Esophagus squamous epithelium (tissue), 5 donors: ENCODE measurements at regions of chr18 and their contacts with region 1.

Region 1: GRCh38 chr18:55415258-55415871 is 172.6 kb downstream of the TCF4 start:
- DNase-seq: peak; percentile 4
- H3K4me3 ChIP-seq: no peak overlapping the region
- H3K27ac ChIP-seq: peak overlapping the region in 1 of 4 donors; percentile 27
- H3K4me1 ChIP-seq: peaks cover 0 to 57% (median 3%) of the 10 kb centered on the region in 3 donors
- H3K27me3 ChIP-seq: no peaks in the 10 kb centered on the region
- CTCF ChIP-seq: peak; percentile 69 to 90 (median 86)
- POLR2A ChIP-seq: no peak

Region 2: DNA sequence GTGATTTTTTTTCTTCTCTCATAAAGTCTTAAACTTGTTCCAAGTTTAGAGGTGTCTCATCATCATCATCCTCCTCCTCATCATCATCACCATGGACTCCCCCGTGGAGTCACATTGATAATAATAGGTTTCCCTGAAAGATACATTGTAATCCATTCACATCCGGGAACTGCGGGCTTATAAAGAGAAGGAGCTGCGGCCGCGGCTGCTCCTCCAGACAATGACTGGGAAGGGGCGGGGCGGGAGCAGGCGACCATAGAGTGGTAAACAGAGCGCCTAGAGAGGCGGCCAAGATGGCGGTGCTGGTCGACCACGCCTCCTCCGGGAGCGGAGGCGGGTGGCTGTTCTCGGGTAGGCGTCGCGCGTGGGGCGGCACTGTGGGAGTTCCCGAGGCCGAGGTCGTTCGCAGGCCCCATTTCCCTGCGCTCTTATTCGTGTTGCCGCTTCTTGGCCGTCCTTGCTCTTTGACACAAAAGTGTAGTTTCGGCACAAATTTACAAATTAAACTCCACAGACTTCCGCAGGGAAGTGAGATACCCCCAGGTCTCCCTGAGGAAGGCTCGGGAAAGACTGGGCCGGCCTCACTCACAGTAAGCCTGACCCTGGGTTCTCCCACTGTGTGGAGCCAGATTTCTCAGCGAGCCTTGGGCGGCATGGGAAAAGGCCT is 174.4 kb after region 1 on chr18:
- intact Hi-C with region 1: loop called (anchors 10 kb)
- DNase-seq: peak; percentile 67
- H3K4me3 ChIP-seq: peak overlapping the region; percentile 61 to 81 (median 77)
- H3K27ac ChIP-seq: peak overlapping the region; percentile 87 to 97 (median 92)
- H3K4me1 ChIP-seq: peaks cover 4 to 37% (median 9%) of the 10 kb centered on the region in 3 donors
- H3K27me3 ChIP-seq: no peaks in the 10 kb centered on the region
- CTCF ChIP-seq: no peak
- POLR2A ChIP-seq: peak in 2 of 4 donors; percentile 57 to 63

Region 3: GRCh38 chr18:55781481-55781957 is 366.2 kb after region 1 on chr18:
- intact Hi-C with region 1: loop called (anchors 10 kb)
- DNase-seq: no peak
- H3K4me3 ChIP-seq: no peak overlapping the region
- H3K27ac ChIP-seq: no peak overlapping the region
- H3K4me1 ChIP-seq: peaks cover 0 to 33% (median 0%) of the 10 kb centered on the region in 3 donors
- H3K27me3 ChIP-seq: peaks cover 0 to 69% (median 0%) of the 10 kb centered on the region in 4 donors
- CTCF ChIP-seq: peak in 5 of 6 experiments; percentile 31 to 64 (median 50)
- POLR2A ChIP-seq: no peak